ENCODE measurements at regions of chr18 and their contacts with region 1.

Region 1: GRCh38 chr18:58449464-58449863 is 179.4 kb downstream of the ALPK2 start:
- DNase-seq: no peak
- ATAC-seq: no peak
- H3K4me3 ChIP-seq: no peak overlapping the region
- H3K27ac ChIP-seq: no peak overlapping the region
- H3K4me1 ChIP-seq: no peaks in the 10 kb centered on the region
- H3K27me3 ChIP-seq: no peaks in the 10 kb centered on the region
- CTCF ChIP-seq: no peak

Region 2: GRCh38 chr18:58263055-58263957 is 186.2 kb before region 1 on chr18:
- CTCF ChIA-PET with region 1: no interaction called
- POLR2A ChIA-PET with region 1: no interaction called
- in situ Hi-C with region 1: no loop called
- intact Hi-C with region 1: no loop called
- DNase-seq: peak; percentile 17
- ATAC-seq: peak; percentile 70
- H3K4me3 ChIP-seq: peak overlapping the region in 1 of 2 experiments; percentile 23; a peak in 2 of 4 replicates
- H3K27ac ChIP-seq: peak overlapping the region; percentile 61
- H3K4me1 ChIP-seq: peaks cover 7% of the 10 kb centered on the region; the same call in 1 of the 2 replicates
- H3K27me3 ChIP-seq: no peaks in the 10 kb centered on the region
- CTCF ChIP-seq: no peak

Region 3: GRCh38 chr18:58375051-58375450 is 74.4 kb before region 1 on chr18:
- CTCF ChIA-PET with region 1: no interaction called
- POLR2A ChIA-PET with region 1: interaction called, 12 read pairs
- in situ Hi-C with region 1: no loop called
- intact Hi-C with region 1: no loop called
- DNase-seq: no peak
- ATAC-seq: no peak
- H3K4me3 ChIP-seq: no peak overlapping the region
- H3K27ac ChIP-seq: no peak overlapping the region
- H3K4me1 ChIP-seq: no peaks in the 10 kb centered on the region
- H3K27me3 ChIP-seq: no peaks in the 10 kb centered on the region
- CTCF ChIP-seq: no peak

Measured in Panc1 (cell line).